B cell (primary cell): ENCODE measurements at regions of chr15 and their contacts with region 1.

Region 1: DNA sequence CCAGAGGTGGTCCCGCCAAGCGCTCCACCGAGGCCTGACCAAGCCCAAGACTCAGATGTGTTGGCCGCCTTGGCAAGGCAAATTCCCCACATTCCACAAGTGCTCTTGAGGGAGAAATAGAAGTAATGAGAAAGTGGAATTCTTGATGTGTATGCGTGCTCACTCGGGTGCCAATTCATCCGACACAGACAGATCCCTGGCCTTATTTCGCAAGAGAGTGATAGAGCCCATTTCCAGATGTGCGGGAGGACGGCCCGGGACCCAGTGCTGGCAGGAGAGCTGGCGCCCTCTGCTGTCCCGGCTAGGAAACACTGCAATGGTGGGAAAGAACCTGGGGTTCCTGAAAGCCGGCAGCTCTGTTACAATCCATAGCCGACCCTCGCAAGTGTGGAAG is 76.0 kb downstream of the HMG20A start:
- DNase-seq: peak; percentile 78
- ATAC-seq: peak; percentile 75
- H3K4me3 ChIP-seq: no peak overlapping the region
- H3K4me3 Mint-ChIP-seq: no peak overlapping the region
- H3K27ac ChIP-seq: no peak overlapping the region
- H3K27ac Mint-ChIP-seq: no peak overlapping the region
- H3K4me1 ChIP-seq: peaks cover 19 to 27% of the 10 kb centered on the region in 2 donors
- H3K4me1 Mint-ChIP-seq: peaks cover 30% of the 10 kb centered on the region
- H3K27me3 ChIP-seq: no peaks in the 10 kb centered on the region
- H3K27me3 Mint-ChIP-seq: no peaks in the 10 kb centered on the region
- CTCF ChIP-seq: peak; percentile 90

Region 2: GRCh38 chr15:77118882-77119321 is 377.8 kb before region 1 on chr15:
- CTCF ChIA-PET with region 1: interaction called, 208 read pairs
- POLR2A ChIA-PET with region 1: no interaction called
- intact Hi-C with region 1: loop called (anchors 1 kb)
- DNase-seq: peak; percentile 76
- ATAC-seq: peak; percentile 54
- H3K4me3 ChIP-seq: no peak overlapping the region
- H3K4me3 Mint-ChIP-seq: no peak overlapping the region
- H3K27ac ChIP-seq: no peak overlapping the region
- H3K27ac Mint-ChIP-seq: no peak overlapping the region
- H3K4me1 ChIP-seq: peaks cover 24 to 31% of the 10 kb centered on the region in 2 donors
- H3K4me1 Mint-ChIP-seq: peaks cover 47% of the 10 kb centered on the region
- H3K27me3 ChIP-seq: no peaks in the 10 kb centered on the region
- H3K27me3 Mint-ChIP-seq: no peaks in the 10 kb centered on the region
- CTCF ChIP-seq: peak; percentile 77

Region 3: GRCh38 chr15:77181305-77182074 is 315.2 kb before region 1 on chr15:
- CTCF ChIA-PET with region 1: interaction called, 158 read pairs
- POLR2A ChIA-PET with region 1: no interaction called
- intact Hi-C with region 1: loop called (anchors 1 kb)
- DNase-seq: peak; percentile 69
- ATAC-seq: peak; percentile 70
- H3K4me3 ChIP-seq: peak overlapping the region in 4 of 5 experiments; percentile 35 to 50 (median 41)
- H3K4me3 Mint-ChIP-seq: peak overlapping the region; percentile 75
- H3K27ac ChIP-seq: peak overlapping the region; percentile 76 to 84
- H3K27ac Mint-ChIP-seq: peak overlapping the region; percentile 88
- H3K4me1 ChIP-seq: peaks cover 74 to 81% of the 10 kb centered on the region in 2 donors
- H3K4me1 Mint-ChIP-seq: peaks cover 72% of the 10 kb centered on the region
- H3K27me3 ChIP-seq: no peaks in the 10 kb centered on the region
- H3K27me3 Mint-ChIP-seq: no peaks in the 10 kb centered on the region
- CTCF ChIP-seq: no peak

Region 4: DNA sequence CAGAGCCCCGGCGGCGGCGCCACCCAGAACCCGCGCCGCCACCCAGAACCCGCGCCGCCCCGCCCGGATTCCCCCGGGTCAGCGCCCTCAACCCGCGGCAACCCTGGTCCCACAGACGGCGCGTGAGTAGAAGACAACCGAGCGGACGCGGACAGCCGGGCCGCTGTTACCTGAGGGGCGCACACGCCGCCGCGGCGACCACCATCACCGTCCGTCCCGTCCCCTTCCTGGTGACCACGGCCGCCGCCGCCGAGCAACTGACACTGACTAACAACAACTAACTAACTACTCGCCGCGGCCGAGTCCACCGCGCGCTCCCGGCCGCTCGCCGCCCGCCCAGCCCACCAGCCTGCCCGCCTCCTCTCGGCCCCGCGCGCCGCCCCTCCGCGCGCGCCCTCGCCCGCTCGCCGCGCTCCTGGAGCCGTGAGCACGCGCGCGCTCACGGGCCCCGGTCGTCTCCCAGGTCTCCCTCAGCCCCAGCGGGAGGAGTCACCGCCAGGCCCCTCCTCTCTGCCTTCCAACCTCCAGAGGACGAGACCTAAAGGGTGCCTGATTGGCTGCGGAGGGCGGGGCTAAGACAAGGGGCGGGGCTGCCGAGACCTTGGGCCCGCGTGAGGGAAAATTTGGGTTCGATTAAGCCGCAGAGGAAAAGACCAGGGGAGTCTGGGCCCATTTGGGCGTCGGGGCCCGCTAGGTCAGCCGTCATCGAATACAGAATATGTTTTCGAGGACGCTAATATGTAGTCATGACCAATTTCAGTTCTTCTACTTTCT is 76.7 kb before region 1 on chr15 and contains the start of gene PEAK1:
- CTCF ChIA-PET with region 1: no interaction called
- POLR2A ChIA-PET with region 1: no interaction called
- intact Hi-C with region 1: loop called (anchors 10 kb)
- DNase-seq: peak; percentile 100
- ATAC-seq: peak; percentile 95
- H3K4me3 ChIP-seq: peak within 1 kb of the TSS; percentile 64 to 97 (median 95)
- H3K4me3 Mint-ChIP-seq: peak within 1 kb of the TSS; percentile 99
- H3K27ac ChIP-seq: peak within 1 kb of the TSS; percentile 77 to 95
- H3K27ac Mint-ChIP-seq: peak within 1 kb of the TSS; percentile 98
- H3K4me1 ChIP-seq: peaks cover 16 to 17% of the 10 kb centered on the region in 2 donors
- H3K4me1 Mint-ChIP-seq: peaks cover 54% of the 10 kb centered on the region
- H3K27me3 ChIP-seq: no peaks in the 10 kb centered on the region
- H3K27me3 Mint-ChIP-seq: no peaks in the 10 kb centered on the region
- CTCF ChIP-seq: no peak
- total RNA-seq, gene PEAK1: 38.0 and 53.2 TPM in 2 replicates

Region 5: DNA sequence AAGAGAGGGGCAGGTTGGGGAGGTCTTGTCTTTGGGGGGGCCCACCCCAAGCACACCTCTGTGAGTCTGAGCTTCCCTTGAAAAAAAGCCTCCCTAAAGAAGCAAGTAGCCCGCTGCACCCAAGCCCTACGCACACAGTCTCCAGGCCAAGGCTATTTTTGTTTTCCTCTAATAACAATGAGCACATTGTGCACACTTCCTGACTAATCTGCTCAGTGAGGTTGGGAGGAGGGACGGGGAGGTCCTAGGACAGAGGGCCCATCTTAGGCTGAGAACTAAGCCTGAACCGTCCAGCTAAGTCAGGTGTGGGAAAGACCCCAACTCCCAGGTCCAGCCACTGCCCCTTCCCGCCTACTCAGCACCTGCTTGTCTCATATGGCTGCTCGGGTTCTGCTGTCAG is 11.2 kb after region 1 on chr15:
- CTCF ChIA-PET with region 1: interaction called, 17 read pairs
- POLR2A ChIA-PET with region 1: no interaction called
- intact Hi-C with region 1: no loop called
- DNase-seq: no peak
- ATAC-seq: no peak
- H3K4me3 ChIP-seq: no peak overlapping the region
- H3K4me3 Mint-ChIP-seq: no peak overlapping the region
- H3K27ac ChIP-seq: no peak overlapping the region
- H3K27ac Mint-ChIP-seq: no peak overlapping the region
- H3K4me1 ChIP-seq: peaks cover 24 to 26% of the 10 kb centered on the region in 2 donors
- H3K4me1 Mint-ChIP-seq: peaks cover 34% of the 10 kb centered on the region
- H3K27me3 ChIP-seq: no peaks in the 10 kb centered on the region
- H3K27me3 Mint-ChIP-seq: no peaks in the 10 kb centered on the region
- CTCF ChIP-seq: no peak